ENCODE measurements at regions of chr17 and their contacts with region 1.

Region 1: GRCh38 chr17:4220655-4221054 is 43.1 kb downstream of the ANKFY1 start:
- DNase-seq: no peak
- ATAC-seq: no peak
- H3K4me3 ChIP-seq: no peak overlapping the region
- H3K27ac ChIP-seq: no peak overlapping the region
- H3K4me1 ChIP-seq: no peaks in the 10 kb centered on the region
- CTCF ChIP-seq: no peak
- EP300 ChIP-seq: no peak
- POLR2A ChIP-seq: no peak
- RAD21 ChIP-seq: no peak

Region 2: DNA sequence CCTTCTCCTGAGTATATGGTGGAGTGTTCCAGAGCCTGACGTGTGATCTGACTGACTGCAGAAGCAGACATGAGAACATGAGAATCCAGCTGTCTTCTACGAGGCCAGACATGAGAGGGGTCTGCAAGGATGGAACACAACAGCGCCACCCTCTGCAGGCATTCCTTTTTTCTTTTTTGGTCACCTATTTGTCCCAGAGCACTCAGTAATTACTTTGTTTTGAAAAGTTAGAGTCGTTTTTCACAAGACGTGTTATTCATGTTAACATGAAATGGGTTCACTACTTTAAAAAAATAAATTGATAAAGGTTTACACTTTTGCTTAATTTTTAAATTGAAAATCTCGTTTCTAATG is 212.6 kb before region 1 on chr17:
- CTCF ChIA-PET with region 1: no interaction called
- POLR2A ChIA-PET with region 1: no interaction called
- DNase-seq: no peak
- ATAC-seq: no peak
- H3K4me3 ChIP-seq: no peak overlapping the region
- H3K27ac ChIP-seq: no peak overlapping the region
- H3K4me1 ChIP-seq: peaks cover 8% of the 10 kb centered on the region; the same call in 2 of the 3 replicates
- CTCF ChIP-seq: 0 out of 3 replicates have a peak, but pooled peaks have one; percentile 20
- EP300 ChIP-seq: no peak
- POLR2A ChIP-seq: no peak
- RAD21 ChIP-seq: no peak

Region 3: DNA sequence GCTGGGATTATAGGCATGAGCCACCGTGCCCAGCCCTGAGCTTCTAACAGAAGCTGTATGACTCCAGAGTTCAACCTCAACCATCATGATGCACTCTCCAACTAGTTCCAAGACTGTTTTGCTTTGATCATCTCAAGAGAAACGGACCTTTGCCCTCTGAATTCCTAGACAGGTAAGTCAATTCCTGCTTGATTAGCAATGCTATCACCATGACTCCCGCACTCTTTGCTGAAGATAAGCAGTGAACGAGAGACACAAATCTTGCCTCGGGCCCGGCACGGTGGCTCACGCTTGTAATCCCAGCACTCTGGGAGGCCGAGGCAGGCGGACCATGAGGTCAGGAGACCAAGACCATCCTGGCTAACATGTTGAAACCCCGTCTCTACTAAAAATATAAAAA is 20.9 kb after region 1 on chr17:
- CTCF ChIA-PET with region 1: interaction called, 30 read pairs
- POLR2A ChIA-PET with region 1: no interaction called
- DNase-seq: no peak
- ATAC-seq: no peak
- H3K4me3 ChIP-seq: no peak overlapping the region
- H3K27ac ChIP-seq: no peak overlapping the region
- H3K4me1 ChIP-seq: no peaks in the 10 kb centered on the region
- CTCF ChIP-seq: no peak
- EP300 ChIP-seq: no peak
- POLR2A ChIP-seq: no peak
- RAD21 ChIP-seq: no peak

Region 4: DNA sequence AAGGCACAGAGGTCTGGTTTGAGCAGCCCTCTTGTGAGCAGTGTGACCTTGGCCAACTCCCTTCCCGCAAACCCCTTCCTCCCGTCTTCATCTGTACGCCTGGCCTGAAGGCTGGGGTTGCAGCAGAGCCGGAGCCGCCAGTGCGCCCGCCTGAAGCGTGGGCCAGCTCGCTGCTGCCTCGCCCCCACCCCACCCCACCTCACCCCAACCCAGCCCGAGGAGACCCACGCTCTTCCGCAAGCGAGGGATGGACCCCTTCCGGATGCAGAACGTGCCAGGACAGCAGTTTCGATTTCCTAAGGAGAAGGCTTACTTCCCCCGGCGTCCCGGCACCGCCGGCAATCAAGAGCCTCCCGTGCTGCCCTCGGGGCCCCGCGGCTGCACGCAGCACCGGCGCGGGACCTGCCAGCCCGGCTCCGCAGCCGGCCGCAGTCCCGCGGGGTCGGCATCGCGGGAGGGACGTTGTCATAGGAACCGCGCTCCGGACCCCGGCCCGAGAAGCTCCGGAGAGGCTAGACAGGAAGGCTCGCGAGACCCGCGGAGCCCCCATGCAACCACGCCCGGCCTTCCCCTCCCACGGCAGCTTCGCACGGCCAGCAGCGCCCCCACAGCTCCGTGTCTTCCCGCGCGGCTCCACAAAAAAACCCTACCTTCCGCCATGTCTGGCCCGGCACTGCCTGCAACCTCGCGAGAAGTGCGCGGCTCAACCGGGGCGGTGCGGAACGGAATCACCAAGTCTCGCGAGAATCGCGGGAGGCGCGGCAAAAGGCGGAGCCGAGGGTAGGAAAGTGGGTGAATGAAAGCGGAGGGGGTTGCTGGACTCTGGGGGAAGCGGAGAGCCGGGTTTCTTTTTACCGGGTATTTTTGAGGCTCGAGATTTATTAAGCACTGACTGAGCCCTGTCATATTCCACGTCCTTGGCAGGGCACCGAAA is 42.9 kb after region 1 on chr17 and contains the start of gene ANKFY1:
- CTCF ChIA-PET with region 1: interaction called, 35 read pairs
- POLR2A ChIA-PET with region 1: no interaction called
- DNase-seq: peak; percentile 94 to 99
- ATAC-seq: peak; percentile 92 to 97
- H3K4me3 ChIP-seq: peak within 1 kb of the TSS; percentile 88
- H3K27ac ChIP-seq: peak within 1 kb of the TSS; percentile 90 to 94
- H3K4me1 ChIP-seq: peaks cover 15% of the 10 kb centered on the region
- CTCF ChIP-seq: no peak
- EP300 ChIP-seq: no peak
- POLR2A ChIP-seq: peak; percentile 89
- RAD21 ChIP-seq: no peak; a peak in 1 of 5 replicates
- polyA plus RNA-seq, gene ANKFY1: 51.7 and 63.3 TPM in 2 replicates

Region 5: DNA sequence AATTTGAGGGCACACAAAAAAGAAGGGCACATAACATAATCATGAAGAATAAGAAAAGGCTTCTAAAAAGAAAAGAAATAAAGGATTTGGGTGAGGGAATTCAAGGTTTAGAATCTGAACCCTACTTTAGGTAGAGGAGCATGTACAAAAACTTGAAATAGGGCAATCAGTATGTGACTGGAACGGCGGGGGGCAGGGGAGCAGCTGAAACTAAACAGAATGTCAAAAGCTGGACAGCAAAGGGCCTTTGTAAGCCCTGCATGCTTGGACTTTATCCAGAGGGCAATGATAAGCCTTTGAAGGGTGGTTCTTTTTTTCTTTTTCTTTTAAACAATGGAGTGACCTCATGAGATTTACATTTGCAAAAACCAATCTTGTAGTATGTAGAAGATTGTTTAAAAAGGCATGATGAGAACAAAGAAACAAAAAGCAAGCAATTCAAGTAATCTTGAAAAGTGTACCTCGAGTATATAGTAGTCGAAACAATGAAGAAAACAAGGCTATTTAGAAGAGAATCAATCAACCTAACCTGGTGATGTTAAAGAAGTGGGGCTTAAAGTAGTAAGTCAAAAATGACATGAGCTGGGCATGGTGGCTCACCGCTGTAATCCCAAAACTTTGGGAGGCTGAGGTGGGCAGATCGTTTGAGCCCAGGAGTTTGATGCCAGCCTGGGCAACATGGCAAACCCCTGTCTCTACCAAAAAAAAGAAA is 89.8 kb after region 1 on chr17:
- CTCF ChIA-PET with region 1: interaction called, 21 read pairs
- POLR2A ChIA-PET with region 1: no interaction called
- DNase-seq: no peak
- ATAC-seq: no peak
- H3K4me3 ChIP-seq: no peak overlapping the region
- H3K27ac ChIP-seq: no peak overlapping the region
- H3K4me1 ChIP-seq: peaks cover 33% of the 10 kb centered on the region
- CTCF ChIP-seq: no peak
- EP300 ChIP-seq: no peak
- POLR2A ChIP-seq: no peak
- RAD21 ChIP-seq: no peak

Region 6: DNA sequence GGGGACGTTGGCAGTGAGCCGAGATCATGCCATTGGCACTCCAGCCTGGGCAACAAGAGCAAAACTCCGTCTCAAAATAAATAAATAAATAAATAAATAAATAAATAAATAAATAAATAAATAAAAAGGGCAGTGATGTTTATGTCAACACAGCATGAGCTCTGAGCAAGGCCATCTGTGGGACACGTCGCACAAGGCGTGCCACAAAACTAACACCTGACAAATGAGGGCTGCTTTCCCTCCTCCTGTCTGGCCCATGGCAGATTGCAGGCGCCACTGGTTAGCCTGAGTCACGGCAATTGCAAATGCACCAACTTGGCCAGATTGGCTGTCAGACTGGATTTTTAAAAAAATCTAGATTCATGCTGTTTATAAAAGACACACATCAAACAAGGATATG is 187.2 kb after region 1 on chr17:
- CTCF ChIA-PET with region 1: interaction called, 86 read pairs
- POLR2A ChIA-PET with region 1: no interaction called
- DNase-seq: no peak
- ATAC-seq: no peak
- H3K4me3 ChIP-seq: no peak overlapping the region
- H3K27ac ChIP-seq: no peak overlapping the region
- H3K4me1 ChIP-seq: no peaks in the 10 kb centered on the region
- CTCF ChIP-seq: no peak
- EP300 ChIP-seq: no peak
- POLR2A ChIP-seq: no peak
- RAD21 ChIP-seq: no peak

Measured in A549 (cell line).